Activated naive CD4-positive, alpha-beta T cell treated with anti-CD3 and anti-CD28 coated beads, Interleukin-2, amount 10 ng/mL, durations not matched to agents 7 days and 5 days (primary cell): ENCODE measurements at regions of chr9 and their contacts with region 1.

Region 1: DNA sequence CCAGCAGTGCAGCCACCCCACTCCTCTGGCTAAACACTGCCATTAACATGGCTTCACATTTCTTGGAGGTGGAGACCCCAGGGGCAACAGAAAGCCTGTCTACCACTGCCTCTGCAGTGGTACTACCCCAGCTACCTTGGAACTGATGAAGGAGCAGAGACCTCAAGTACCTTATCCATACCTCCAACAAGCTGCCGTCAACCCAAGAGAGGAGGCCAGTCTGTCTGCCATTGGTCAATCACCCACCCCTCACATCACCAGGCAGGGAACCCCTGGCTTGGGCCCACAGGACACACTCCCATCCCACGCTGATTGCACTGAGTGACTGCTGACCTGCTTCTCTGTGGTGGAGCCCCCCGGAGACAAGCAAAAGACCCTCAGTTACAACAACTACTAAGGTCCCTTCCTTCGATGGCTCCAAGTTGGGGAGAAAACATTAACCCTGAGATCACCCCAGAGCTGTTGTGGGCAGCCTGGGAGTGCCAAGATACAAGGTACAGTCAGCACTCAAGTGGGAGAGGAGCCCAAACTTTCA is 5.6 kb downstream of the IFNA14 start:
- DNase-seq: no peak
- H3K4me3 Mint-ChIP-seq: no peak overlapping the region
- H3K27ac Mint-ChIP-seq: no peak overlapping the region
- H3K4me1 Mint-ChIP-seq: peaks cover 8% of the 10 kb centered on the region
- H3K27me3 Mint-ChIP-seq: peaks cover 33% of the 10 kb centered on the region

Region 2: GRCh38 chr9:21016701-21017491 is 217.3 kb before region 1 on chr9:
- CTCF ChIA-PET with region 1: no interaction called
- DNase-seq: no peak
- H3K4me3 Mint-ChIP-seq: no peak overlapping the region
- H3K27ac Mint-ChIP-seq: no peak overlapping the region
- H3K4me1 Mint-ChIP-seq: no peaks in the 10 kb centered on the region
- H3K27me3 Mint-ChIP-seq: no peaks in the 10 kb centered on the region

Region 3: GRCh38 chr9:21028466-21028865 is 205.8 kb before region 1 on chr9:
- CTCF ChIA-PET with region 1: no interaction called
- DNase-seq: no peak
- H3K4me3 Mint-ChIP-seq: no peak overlapping the region
- H3K27ac Mint-ChIP-seq: no peak overlapping the region
- H3K4me1 Mint-ChIP-seq: peaks cover 43% of the 10 kb centered on the region
- H3K27me3 Mint-ChIP-seq: no peaks in the 10 kb centered on the region

Region 4: GRCh38 chr9:21252721-21253547 is 18.7 kb after region 1 on chr9:
- CTCF ChIA-PET with region 1: interaction called, 12 read pairs
- DNase-seq: peak; percentile 31
- H3K4me3 Mint-ChIP-seq: no peak overlapping the region
- H3K27ac Mint-ChIP-seq: no peak overlapping the region
- H3K4me1 Mint-ChIP-seq: peaks cover 5% of the 10 kb centered on the region
- H3K27me3 Mint-ChIP-seq: peaks cover 45% of the 10 kb centered on the region

Region 5: DNA sequence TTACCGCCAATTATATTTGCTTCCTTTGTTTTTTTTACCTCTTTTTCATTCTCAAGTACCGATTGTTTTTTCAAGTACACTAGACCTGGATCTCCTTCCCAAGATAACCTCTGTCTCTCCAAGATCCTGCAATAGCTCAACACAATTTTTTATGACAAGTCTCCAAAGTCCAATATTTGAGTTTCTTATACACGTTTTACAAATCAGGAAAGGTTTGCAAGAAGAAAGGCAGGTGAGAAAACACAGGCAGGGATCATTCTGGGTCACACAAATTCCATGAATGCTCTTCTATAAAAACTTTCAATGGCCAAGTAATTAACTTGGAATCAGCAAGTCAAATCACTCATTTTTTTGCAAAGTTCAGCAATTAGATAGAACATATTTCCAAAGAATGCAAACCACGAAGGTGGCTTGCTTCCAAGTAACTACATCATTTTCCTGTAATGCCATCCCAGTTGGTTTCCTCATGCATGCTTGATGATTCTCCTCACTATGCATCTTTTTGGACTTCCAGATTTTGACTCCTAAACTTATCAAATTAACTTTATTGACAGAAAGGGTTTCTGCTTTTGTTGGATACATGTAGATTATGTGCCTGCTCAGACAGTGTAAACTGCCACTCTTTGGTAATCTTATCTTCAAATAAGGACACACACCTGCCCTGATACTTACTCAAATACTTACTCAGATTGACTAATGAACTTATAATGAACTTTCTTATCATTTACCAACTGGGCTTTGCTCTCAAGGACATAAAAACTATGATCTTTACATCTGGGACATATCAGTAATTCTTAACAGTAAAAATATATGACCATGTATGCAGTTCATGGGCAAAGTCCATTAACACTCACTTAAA is 272.6 kb after region 1 on chr9:
- CTCF ChIA-PET with region 1: no interaction called
- DNase-seq: no peak
- H3K4me3 Mint-ChIP-seq: no peak overlapping the region
- H3K27ac Mint-ChIP-seq: no peak overlapping the region
- H3K4me1 Mint-ChIP-seq: peaks cover 5% of the 10 kb centered on the region
- H3K27me3 Mint-ChIP-seq: no peaks in the 10 kb centered on the region